ENCODE measurements at regions of chr7 and their contacts with region 1.

Region 1: GRCh38 chr7:7968543-7969305 is at the start of gene GLCCI1:
- DNase-seq: peak; percentile 91 to 99 (median 96)
- ATAC-seq: peak; percentile 88
- H3K4me3 ChIP-seq: peak within 1 kb of the TSS; percentile 44 to 74
- H3K4me3 Mint-ChIP-seq: peak within 1 kb of the TSS; percentile 92
- H3K27ac ChIP-seq: peak within 1 kb of the TSS; percentile 61 to 79
- H3K27ac Mint-ChIP-seq: peak within 1 kb of the TSS; percentile 95
- H3K4me1 ChIP-seq: peaks cover 35% of the 10 kb centered on the region
- H3K4me1 Mint-ChIP-seq: peaks cover 36% of the 10 kb centered on the region
- H3K27me3 ChIP-seq: no peaks in the 10 kb centered on the region
- H3K27me3 Mint-ChIP-seq: no peaks in the 10 kb centered on the region
- CTCF ChIP-seq: no peak
- total RNA-seq, gene GLCCI1: 21.8 to 23.6 TPM

Region 2: DNA sequence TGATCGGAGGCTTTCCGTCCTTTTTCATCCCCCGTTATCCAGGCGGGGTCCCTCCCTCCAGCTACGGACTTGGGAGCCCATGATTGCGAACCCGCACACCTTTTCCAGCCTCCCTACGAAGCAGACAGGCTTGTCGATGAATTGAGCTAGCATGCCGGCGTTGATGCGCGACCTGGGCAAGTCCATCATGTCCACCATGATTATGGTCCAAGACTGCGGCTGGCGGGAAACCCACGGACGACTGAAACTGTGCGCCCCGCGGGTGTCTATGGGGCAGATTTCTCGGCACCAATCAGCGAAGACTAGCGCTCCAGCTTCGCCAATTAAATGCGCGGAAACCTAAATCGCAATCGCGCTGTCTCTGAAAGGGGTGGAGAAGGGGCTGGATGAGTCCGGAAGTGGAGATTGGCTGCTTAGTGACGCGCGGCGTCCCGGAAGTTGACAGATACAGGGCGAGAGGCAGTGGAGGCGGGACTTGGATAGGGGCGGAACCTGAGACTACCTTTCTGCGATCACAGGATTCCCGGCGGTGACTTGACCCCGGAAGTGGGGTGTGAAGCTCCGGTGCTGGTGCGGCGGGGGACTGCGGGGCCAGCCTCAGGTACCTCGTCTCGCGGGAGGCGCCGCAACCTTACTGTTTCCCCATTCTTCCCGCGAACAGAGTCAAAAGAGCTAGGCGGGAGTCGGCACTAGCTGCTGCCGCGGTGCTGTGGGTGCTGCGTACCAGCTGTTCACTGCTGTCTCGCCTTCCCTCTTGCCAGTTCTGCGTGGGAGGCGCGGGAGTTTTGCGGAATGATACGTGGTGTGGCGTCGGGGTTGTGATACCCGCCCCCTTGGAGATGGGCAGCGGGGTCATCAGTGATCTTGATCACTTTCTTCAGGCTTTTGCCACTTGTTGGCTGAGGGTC is 328.2 kb before region 1 on chr7 and contains the start of gene UMAD1:
- CTCF ChIA-PET with region 1: no interaction called
- POLR2A ChIA-PET with region 1: interaction called, 22 read pairs
- intact Hi-C with region 1: loop called (anchors 1 kb)
- DNase-seq: peak; percentile 96 to 100 (median 98)
- ATAC-seq: peak; percentile 87
- H3K4me3 ChIP-seq: peak within 1 kb of the TSS; percentile 84 to 94
- H3K4me3 Mint-ChIP-seq: peak within 1 kb of the TSS; percentile 97
- H3K27ac ChIP-seq: peak within 1 kb of the TSS; percentile 96 to 97
- H3K27ac Mint-ChIP-seq: peak within 1 kb of the TSS; percentile 96
- H3K4me1 ChIP-seq: peaks cover 22% of the 10 kb centered on the region
- H3K4me1 Mint-ChIP-seq: peaks cover 46% of the 10 kb centered on the region
- H3K27me3 ChIP-seq: no peaks in the 10 kb centered on the region
- H3K27me3 Mint-ChIP-seq: no peaks in the 10 kb centered on the region
- CTCF ChIP-seq: no peak
- total RNA-seq, gene UMAD1: 11.1 to 11.2 TPM

Region 3: DNA sequence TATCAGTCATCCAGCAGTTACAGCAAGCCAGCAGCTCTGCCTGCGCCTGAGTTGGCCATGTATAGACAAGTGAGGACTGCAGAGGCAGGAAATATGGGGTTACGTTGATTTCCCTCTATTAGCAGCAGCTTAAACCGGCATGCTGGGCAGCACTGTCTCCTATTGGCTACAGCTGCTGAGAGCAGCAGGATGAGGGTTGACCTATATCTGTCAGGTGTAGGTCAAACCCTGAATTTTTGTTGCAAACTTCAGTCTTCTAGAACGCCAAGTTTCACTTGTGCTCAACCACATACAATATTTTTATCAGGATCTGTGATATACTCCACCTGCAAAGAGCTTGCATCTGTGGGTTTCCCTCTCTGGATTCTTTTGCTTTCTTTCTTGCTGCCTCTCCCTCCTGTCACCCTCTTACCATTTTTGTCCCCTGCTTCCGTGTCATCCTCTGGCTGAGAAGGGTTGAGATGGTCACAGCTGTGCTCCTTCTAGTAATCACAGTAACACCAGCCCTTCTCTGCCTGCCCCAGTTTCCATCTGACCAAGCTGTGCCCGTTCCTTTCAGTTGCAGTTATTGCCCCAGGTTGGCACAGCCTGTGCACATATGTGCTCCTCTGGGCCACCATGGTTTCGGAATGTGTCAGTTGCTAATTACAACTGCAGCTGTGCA is 24.0 kb before region 1 on chr7:
- CTCF ChIA-PET with region 1: interaction called, 5 read pairs
- POLR2A ChIA-PET with region 1: interaction called, 12 read pairs
- intact Hi-C with region 1: loop called in 1 of 2 experiments (anchors 2 kb)
- DNase-seq: peak in 8 of 9 experiments; percentile 15 to 81 (median 48)
- ATAC-seq: peak; percentile 88
- H3K4me3 ChIP-seq: peak overlapping the region; percentile 5 to 18
- H3K4me3 Mint-ChIP-seq: peak overlapping the region; percentile 71
- H3K27ac ChIP-seq: peak overlapping the region; percentile 1 to 66
- H3K27ac Mint-ChIP-seq: peak overlapping the region; percentile 70
- H3K4me1 ChIP-seq: peaks cover 15% of the 10 kb centered on the region
- H3K4me1 Mint-ChIP-seq: peaks cover 28% of the 10 kb centered on the region
- H3K27me3 ChIP-seq: no peaks in the 10 kb centered on the region
- H3K27me3 Mint-ChIP-seq: no peaks in the 10 kb centered on the region
- CTCF ChIP-seq: no peak

Region 4: GRCh38 chr7:8015100-8015748 is 46.5 kb after region 1 on chr7:
- CTCF ChIA-PET with region 1: interaction called, 4 read pairs
- POLR2A ChIA-PET with region 1: interaction called, 4 read pairs
- intact Hi-C with region 1: loop called (anchors 5 kb)
- DNase-seq: peak in 3 of 9 experiments; percentile 6 to 67 (median 51)
- ATAC-seq: peak; percentile 84
- H3K4me3 ChIP-seq: peak overlapping the region in 1 of 2 experiments; percentile 16
- H3K4me3 Mint-ChIP-seq: peak overlapping the region; percentile 53
- H3K27ac ChIP-seq: peak overlapping the region in 1 of 2 experiments; percentile 76
- H3K27ac Mint-ChIP-seq: peak overlapping the region; percentile 83
- H3K4me1 ChIP-seq: peaks cover 26% of the 10 kb centered on the region
- H3K4me1 Mint-ChIP-seq: peaks cover 46% of the 10 kb centered on the region
- H3K27me3 ChIP-seq: no peaks in the 10 kb centered on the region
- H3K27me3 Mint-ChIP-seq: no peaks in the 10 kb centered on the region
- CTCF ChIP-seq: no peak

Region 5: DNA sequence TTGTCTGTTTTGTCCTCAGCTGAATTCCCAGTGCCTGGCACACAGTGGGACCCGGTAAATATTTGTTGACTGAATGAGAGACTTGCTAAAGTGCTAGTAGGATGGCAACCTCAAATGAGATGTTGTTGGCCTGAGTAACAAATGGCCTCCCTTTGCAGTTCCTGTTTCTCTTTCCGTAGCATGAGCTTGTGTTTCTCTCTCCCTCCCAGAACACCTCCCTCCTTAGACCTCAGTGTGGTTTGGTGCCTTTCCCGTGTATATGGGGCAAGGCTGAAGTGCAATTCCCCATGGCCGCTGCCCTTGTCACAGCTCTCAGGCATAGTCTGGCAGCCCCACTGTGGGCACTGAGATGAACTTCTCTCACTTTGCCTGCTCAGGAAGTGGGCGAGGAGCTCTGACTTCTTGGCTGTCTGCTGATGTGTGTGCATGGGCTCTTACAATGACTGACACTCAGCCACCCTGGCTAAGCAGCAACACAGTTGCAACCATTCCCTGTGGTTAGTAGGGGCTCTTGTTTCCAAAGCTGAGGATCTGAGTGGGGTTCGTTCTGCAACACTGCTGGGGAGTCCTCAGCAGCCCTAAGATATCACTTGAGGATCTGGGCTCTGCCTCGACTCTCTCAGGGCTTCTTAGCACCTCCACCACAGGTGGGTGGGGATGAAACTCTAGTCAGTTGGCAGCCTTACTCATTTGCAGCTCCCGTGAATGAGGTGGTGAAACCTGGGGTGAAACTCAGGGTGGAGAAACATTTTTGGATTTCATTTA is 157.1 kb after region 1 on chr7:
- CTCF ChIA-PET with region 1: interaction called, 5 read pairs
- POLR2A ChIA-PET with region 1: interaction called, 15 read pairs
- intact Hi-C with region 1: no loop called
- DNase-seq: peak; percentile 67 to 96 (median 81)
- ATAC-seq: peak; percentile 91
- H3K4me3 ChIP-seq: peak overlapping the region in 1 of 2 experiments; percentile 3
- H3K4me3 Mint-ChIP-seq: peak overlapping the region; percentile 33
- H3K27ac ChIP-seq: peak overlapping the region; percentile 60 to 65
- H3K27ac Mint-ChIP-seq: peak overlapping the region; percentile 97
- H3K4me1 ChIP-seq: peaks cover 61% of the 10 kb centered on the region
- H3K4me1 Mint-ChIP-seq: peaks cover 85% of the 10 kb centered on the region
- H3K27me3 ChIP-seq: no peaks in the 10 kb centered on the region
- H3K27me3 Mint-ChIP-seq: no peaks in the 10 kb centered on the region
- CTCF ChIP-seq: no peak

Region 6: GRCh38 chr7:8176370-8177081 is 207.8 kb after region 1 on chr7:
- CTCF ChIA-PET with region 1: interaction called, 3 read pairs
- POLR2A ChIA-PET with region 1: interaction called, 7 read pairs
- intact Hi-C with region 1: loop called in 1 of 2 experiments (anchors 1 kb)
- DNase-seq: peak; percentile 31 to 90 (median 71)
- ATAC-seq: peak; percentile 91
- H3K4me3 ChIP-seq: peak overlapping the region; percentile 6 to 36
- H3K4me3 Mint-ChIP-seq: peak overlapping the region; percentile 74
- H3K27ac ChIP-seq: peak overlapping the region; percentile 63 to 84
- H3K27ac Mint-ChIP-seq: peak overlapping the region; percentile 98
- H3K4me1 ChIP-seq: peaks cover 50% of the 10 kb centered on the region
- H3K4me1 Mint-ChIP-seq: peaks cover 65% of the 10 kb centered on the region
- H3K27me3 ChIP-seq: no peaks in the 10 kb centered on the region
- H3K27me3 Mint-ChIP-seq: no peaks in the 10 kb centered on the region
- CTCF ChIP-seq: no peak